Mucosa of descending colon (tissue), 3 donors: ENCODE measurements at regions of chr1 and their contacts with region 1.

Region 1: DNA sequence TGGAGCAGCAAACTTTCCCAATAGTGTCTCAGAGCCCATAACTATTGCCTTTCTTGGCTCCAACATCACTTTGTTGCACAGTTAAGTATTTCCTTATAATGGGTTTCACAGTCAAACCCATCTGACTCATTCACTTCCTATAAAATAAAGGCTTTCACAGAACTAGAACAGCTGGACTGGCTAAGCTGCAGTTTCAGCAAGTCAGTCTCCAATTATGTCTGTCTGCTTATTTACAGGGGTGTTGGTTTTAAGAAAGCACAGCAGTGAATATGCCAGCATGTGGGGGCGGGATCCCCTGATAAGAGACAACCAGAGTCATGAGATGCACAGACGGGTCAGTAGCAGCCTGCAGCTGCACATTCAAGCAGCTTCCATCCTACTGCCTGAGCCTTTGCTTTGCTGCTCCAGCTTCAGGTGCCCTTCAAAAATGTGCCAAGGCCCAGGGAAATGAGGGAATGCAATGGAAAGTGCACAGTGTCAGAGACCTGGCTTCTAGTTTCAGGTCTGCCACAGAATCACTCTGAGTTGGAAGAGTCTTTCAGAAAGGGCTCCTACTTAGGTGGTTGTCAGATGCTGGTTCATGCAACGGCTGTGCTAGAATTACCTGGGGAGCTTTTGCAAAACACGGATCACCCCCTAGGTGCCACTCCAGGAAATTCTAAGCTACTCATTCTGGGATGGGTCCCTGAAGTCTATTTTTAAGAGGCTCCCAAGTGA is 24.8 kb downstream of the RNF19B start:
- DNase-seq: peak; percentile 57 to 72 (median 68)
- ATAC-seq: peak; percentile 80
- H3K4me3 ChIP-seq: no peak overlapping the region
- H3K4me1 ChIP-seq: peaks cover 56% of the 10 kb centered on the region
- CTCF ChIP-seq: no peak

Region 2: GRCh38 chr1:33055210-33056008 is 115.6 kb after region 1 on chr1:
- intact Hi-C with region 1: loop called in 1 of 2 experiments (anchors 10 kb)
- DNase-seq: peak; percentile 69 to 83 (median 72)
- ATAC-seq: peak; percentile 81
- H3K4me3 ChIP-seq: no peak overlapping the region
- H3K4me1 ChIP-seq: peaks cover 14% of the 10 kb centered on the region
- CTCF ChIP-seq: peak; percentile 48

Region 3: GRCh38 chr1:33080885-33081553 is 141.2 kb after region 1 on chr1 and contains the start of gene AZIN2:
- intact Hi-C with region 1: loop called in 1 of 2 experiments (anchors 10 kb)
- DNase-seq: peak; percentile 98 to 99 (median 99)
- ATAC-seq: peak; percentile 99
- H3K4me3 ChIP-seq: peak within 1 kb of the TSS; percentile 29
- H3K4me1 ChIP-seq: no peaks in the 10 kb centered on the region
- CTCF ChIP-seq: no peak
- total RNA-seq, gene AZIN2: 13.8 to 36.5 (median 19.0) TPM

Region 4: DNA sequence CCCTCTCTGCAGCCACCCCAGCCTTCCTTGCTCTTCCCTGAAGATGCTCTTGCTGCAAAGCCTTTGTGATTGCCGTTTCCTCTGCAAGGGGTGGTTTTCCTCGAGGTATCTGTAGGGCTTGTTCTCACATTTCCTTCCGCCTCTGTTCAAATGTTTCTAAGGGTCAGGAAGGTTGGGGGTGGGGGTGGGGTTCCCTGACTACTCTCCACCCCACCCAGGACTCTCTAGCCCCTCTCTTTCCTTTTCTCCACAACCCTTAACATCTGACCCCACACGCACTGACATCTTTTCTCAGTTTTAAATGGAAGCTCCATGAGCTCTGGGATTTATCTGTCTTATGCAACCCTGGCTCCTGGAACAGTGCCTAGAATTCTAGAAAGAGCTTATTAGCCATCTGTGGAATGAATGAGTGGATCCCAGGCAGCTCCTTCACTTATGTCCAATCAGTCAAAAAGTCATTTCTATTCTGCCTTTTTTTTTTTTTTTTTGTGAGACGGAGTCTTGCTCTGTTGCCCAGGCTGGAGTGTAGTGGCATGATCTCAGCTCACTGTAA is 289.2 kb after region 1 on chr1:
- intact Hi-C with region 1: no loop called
- DNase-seq: peak in 1 of 3 donors; percentile 43
- ATAC-seq: no peak
- H3K4me3 ChIP-seq: no peak overlapping the region
- H3K4me1 ChIP-seq: no peaks in the 10 kb centered on the region
- CTCF ChIP-seq: no peak